GM12878 (cell line): ENCODE measurements at regions of chr3 and their contacts with region 1.

Region 1: GRCh38 chr3:16884084-16884747 is 539 bp upstream of the PLCL2 start:
- DNase-seq: no peak
- ATAC-seq: peak; percentile 71
- H3K4me3 ChIP-seq: peak overlapping the region; percentile 75
- H3K27ac ChIP-seq: peak overlapping the region; percentile 93
- H3K4me1 ChIP-seq: peaks cover 2% of the 10 kb centered on the region; the same call in 1 of the 2 replicates
- H3K27me3 ChIP-seq: no peaks in the 10 kb centered on the region
- CTCF ChIP-seq: peak; percentile 37 to 79 (median 74)
- EP300 ChIP-seq: no peak
- POLR2A ChIP-seq: peak; percentile 66
- RAD21 ChIP-seq: peak; percentile 64

Region 2: GRCh38 chr3:16842272-16843270 is 41.6 kb before region 1 on chr3:
- CTCF ChIA-PET with region 1: interaction called, 56 read pairs
- POLR2A ChIA-PET with region 1: interaction called, 14 read pairs
- RAD21 ChIA-PET with region 1: interaction called, 33 read pairs
- SMC1A ChIA-PET with region 1: interaction called, 45 read pairs
- in situ Hi-C with region 1: no loop called
- intact Hi-C with region 1: loop called (anchors 2 kb)
- DNase-seq: peak; percentile 83
- ATAC-seq: peak; percentile 93
- H3K4me3 ChIP-seq: peak overlapping the region; percentile 36
- H3K27ac ChIP-seq: peak overlapping the region; percentile 77
- H3K4me1 ChIP-seq: peaks cover 45% of the 10 kb centered on the region
- H3K27me3 ChIP-seq: no peaks in the 10 kb centered on the region
- CTCF ChIP-seq: no peak
- EP300 ChIP-seq: peak in 1 of 2 experiments; percentile 16; a peak in 1 of 4 replicates
- POLR2A ChIP-seq: peak; percentile 58
- RAD21 ChIP-seq: no peak

Region 3: DNA sequence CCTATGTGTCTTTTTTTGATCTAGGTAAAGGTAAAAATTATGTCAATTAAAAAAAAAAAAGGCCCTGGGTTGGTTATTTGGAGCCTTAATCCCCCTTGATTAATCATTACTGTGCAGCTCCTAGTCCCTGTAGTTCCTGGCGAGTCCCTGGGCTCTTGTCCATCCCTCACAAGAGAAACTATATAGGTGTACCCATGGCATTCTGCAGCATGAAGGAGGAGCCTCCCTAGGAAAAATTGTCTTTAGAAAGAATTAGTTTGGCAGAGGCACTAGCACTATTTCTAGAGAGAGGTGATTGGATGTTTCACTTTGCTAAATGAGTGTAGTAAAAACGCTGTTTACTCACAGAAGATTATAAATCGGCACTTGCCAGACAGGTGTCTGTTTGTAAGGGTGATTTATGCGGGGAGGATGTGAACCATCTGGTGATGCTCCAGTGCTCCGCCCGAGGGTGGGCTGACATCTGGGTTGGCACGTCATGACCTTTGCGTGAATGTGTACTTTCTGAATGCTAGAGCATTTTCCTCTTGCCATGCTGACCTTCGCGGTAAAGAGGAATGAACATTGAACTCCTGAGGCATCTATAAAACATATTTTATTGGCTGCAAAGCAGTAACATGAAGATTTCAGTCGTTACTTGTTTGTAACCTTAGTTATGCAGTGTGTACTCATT is 13.2 kb after region 1 on chr3:
- CTCF ChIA-PET with region 1: interaction called, 6 read pairs
- POLR2A ChIA-PET with region 1: interaction called, 8 read pairs
- RAD21 ChIA-PET with region 1: interaction called, 7 read pairs
- SMC1A ChIA-PET with region 1: interaction called, 61 read pairs
- in situ Hi-C with region 1: no loop called
- intact Hi-C with region 1: no loop called
- DNase-seq: peak; percentile 52
- ATAC-seq: peak; percentile 79
- H3K4me3 ChIP-seq: peak overlapping the region; percentile 47; the same call in 1 of the 2 replicates
- H3K27ac ChIP-seq: peak overlapping the region; percentile 79
- H3K4me1 ChIP-seq: peaks cover 26% of the 10 kb centered on the region
- H3K27me3 ChIP-seq: no peaks in the 10 kb centered on the region
- CTCF ChIP-seq: no peak
- EP300 ChIP-seq: peak in 1 of 2 experiments; percentile 47; a peak in 1 of 4 replicates
- POLR2A ChIP-seq: no peak
- RAD21 ChIP-seq: no peak

Region 4: DNA sequence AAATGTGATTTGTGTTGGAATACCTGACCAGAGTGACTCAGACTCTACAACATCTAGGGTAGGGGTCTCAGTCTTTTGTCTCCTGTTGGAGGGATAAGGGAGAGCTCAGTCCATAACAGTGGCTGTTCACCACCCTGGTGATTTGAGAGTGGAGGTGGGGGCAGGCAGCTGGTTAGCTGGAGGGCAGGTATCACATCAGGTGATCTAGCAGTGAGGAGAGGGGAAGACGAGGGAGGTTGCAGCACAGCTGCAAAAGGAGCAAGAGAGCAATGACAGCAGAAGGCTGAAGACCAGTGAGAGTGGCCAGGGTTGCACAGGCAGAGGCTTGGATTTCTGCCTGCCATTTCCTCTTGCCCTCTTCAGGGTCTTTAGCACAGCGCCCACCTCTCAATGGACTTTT is 38.9 kb after region 1 on chr3:
- CTCF ChIA-PET with region 1: interaction called, 12 read pairs
- POLR2A ChIA-PET with region 1: interaction called, 4 read pairs
- RAD21 ChIA-PET with region 1: interaction called, 40 read pairs
- SMC1A ChIA-PET with region 1: interaction called, 45 read pairs
- in situ Hi-C with region 1: no loop called
- intact Hi-C with region 1: loop called (anchors 5 kb)
- DNase-seq: no peak
- ATAC-seq: no peak
- H3K4me3 ChIP-seq: no peak overlapping the region
- H3K27ac ChIP-seq: no peak overlapping the region
- H3K4me1 ChIP-seq: peaks cover 32% of the 10 kb centered on the region
- H3K27me3 ChIP-seq: no peaks in the 10 kb centered on the region
- CTCF ChIP-seq: no peak
- EP300 ChIP-seq: no peak
- POLR2A ChIP-seq: no peak
- RAD21 ChIP-seq: no peak

Region 5: GRCh38 chr3:17044855-17045254 is 160.6 kb after region 1 on chr3:
- CTCF ChIA-PET with region 1: no interaction called
- POLR2A ChIA-PET with region 1: interaction called, 3 read pairs
- RAD21 ChIA-PET with region 1: interaction called, 5 read pairs
- SMC1A ChIA-PET with region 1: interaction called, 8 read pairs
- in situ Hi-C with region 1: no loop called
- intact Hi-C with region 1: loop called (anchors 5 kb)
- DNase-seq: no peak
- ATAC-seq: peak; percentile 84
- H3K4me3 ChIP-seq: no peak overlapping the region
- H3K27ac ChIP-seq: peak overlapping the region; percentile 72
- H3K4me1 ChIP-seq: peaks cover 38% of the 10 kb centered on the region
- H3K27me3 ChIP-seq: no peaks in the 10 kb centered on the region
- CTCF ChIP-seq: no peak
- EP300 ChIP-seq: peak; percentile 85 to 87; a peak in 3 of 4 replicates
- POLR2A ChIP-seq: no peak
- RAD21 ChIP-seq: 0 out of 2 replicates have a peak, but pooled peaks have one; percentile 5

Region 6: GRCh38 chr3:17233398-17233800 is 349.2 kb after region 1 on chr3:
- CTCF ChIA-PET with region 1: interaction called, 15 read pairs
- POLR2A ChIA-PET with region 1: no interaction called
- RAD21 ChIA-PET with region 1: interaction called, 10 read pairs
- SMC1A ChIA-PET with region 1: interaction called, 5 read pairs
- in situ Hi-C with region 1: no loop called
- intact Hi-C with region 1: loop called (anchors 1 kb)
- DNase-seq: peak; percentile 51
- ATAC-seq: peak; percentile 99
- H3K4me3 ChIP-seq: no peak overlapping the region
- H3K27ac ChIP-seq: no peak overlapping the region
- H3K4me1 ChIP-seq: peaks cover 12% of the 10 kb centered on the region; the same call in 1 of the 2 replicates
- H3K27me3 ChIP-seq: no peaks in the 10 kb centered on the region
- CTCF ChIP-seq: peak; percentile 50 to 77 (median 65); a peak in 5 of 6 replicates
- EP300 ChIP-seq: no peak
- POLR2A ChIP-seq: no peak
- RAD21 ChIP-seq: peak; percentile 99